ENCODE measurements at regions of chr7 and their contacts with region 1.

Region 1: DNA sequence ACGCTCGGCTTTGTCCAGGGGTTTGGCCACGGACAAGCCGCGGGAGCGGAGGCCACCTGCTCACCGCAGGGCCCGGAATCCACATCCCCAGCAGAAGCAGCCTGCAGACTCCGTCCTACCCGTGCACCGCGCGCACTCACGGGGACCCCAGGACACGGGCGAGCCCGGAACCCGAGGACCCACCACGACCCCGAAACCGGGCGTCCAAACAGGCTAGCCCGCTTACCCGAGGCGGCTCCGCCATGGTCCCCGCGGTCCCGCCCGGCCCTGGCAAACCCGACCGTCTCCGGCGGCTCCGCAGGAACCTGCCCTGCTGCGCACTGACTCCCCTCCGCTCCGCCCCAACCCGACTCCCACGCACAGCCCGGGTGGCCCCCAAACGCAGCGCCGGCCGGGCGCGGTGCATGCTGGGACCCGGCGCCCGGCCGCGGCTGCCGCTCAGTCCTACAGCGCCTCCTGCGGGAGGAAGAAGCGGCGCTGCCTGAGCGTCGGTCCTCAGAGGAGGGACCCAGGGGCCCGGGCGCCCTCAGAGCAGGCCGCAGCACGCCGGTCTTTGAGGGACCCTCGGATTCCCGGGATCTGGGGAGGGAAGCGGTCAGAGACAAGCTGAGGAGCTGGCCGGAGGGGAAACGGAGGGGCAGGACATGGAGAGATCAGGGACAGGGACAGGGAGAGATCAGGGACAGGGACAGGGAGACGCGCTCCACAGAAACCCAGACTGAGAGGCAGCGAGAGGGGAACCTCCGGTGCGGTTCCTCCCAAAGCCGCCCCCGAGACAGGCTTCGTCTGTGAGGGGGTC is at the start of gene ZNF786:
- DNase-seq: peak; percentile 90
- ATAC-seq: peak; percentile 85
- H3K4me3 ChIP-seq: peak within 1 kb of the TSS; percentile 97
- H3K27ac ChIP-seq: peak within 1 kb of the TSS; percentile 69
- H3K4me1 ChIP-seq: no peaks in the 10 kb centered on the region
- H3K27me3 ChIP-seq: no peaks in the 10 kb centered on the region
- CTCF ChIP-seq: peak; percentile 80
- total RNA-seq, gene ZNF786: 4.2 and 6.3 TPM in 2 replicates

Region 2: GRCh38 chr7:149071641-149072437 is 18.8 kb before region 1 on chr7:
- CTCF ChIA-PET with region 1: no interaction called
- POLR2A ChIA-PET with region 1: interaction called, 21 read pairs
- intact Hi-C with region 1: no loop called
- DNase-seq: no peak
- ATAC-seq: no peak
- H3K4me3 ChIP-seq: no peak overlapping the region
- H3K27ac ChIP-seq: no peak overlapping the region
- H3K4me1 ChIP-seq: no peaks in the 10 kb centered on the region
- H3K27me3 ChIP-seq: no peaks in the 10 kb centered on the region
- CTCF ChIP-seq: no peak

Region 3: GRCh38 chr7:149239345-149240191 is 149.0 kb after region 1 on chr7 and contains the start of gene ZNF212:
- CTCF ChIA-PET with region 1: no interaction called
- POLR2A ChIA-PET with region 1: no interaction called
- intact Hi-C with region 1: no loop called
- DNase-seq: peak; percentile 91
- ATAC-seq: peak; percentile 95
- H3K4me3 ChIP-seq: peak within 1 kb of the TSS; percentile 94
- H3K27ac ChIP-seq: peak within 1 kb of the TSS; percentile 92
- H3K4me1 ChIP-seq: peaks cover 32% of the 10 kb centered on the region
- H3K27me3 ChIP-seq: no peaks in the 10 kb centered on the region
- CTCF ChIP-seq: peak; percentile 87
- total RNA-seq, gene ZNF212: 9.7 and 10.4 TPM in 2 replicates